PC-9 (cell line): ENCODE measurements at regions of chrX and their contacts with region 1.

Region 1: GRCh38 chrX:133171962-133172708 is 46.0 kb downstream of the TFDP3 start:
- DNase-seq: peak; percentile 19 to 51
- H3K4me3 ChIP-seq: no peak overlapping the region
- H3K27ac ChIP-seq: no peak overlapping the region
- H3K4me1 ChIP-seq: no peaks in the 10 kb centered on the region
- H3K27me3 ChIP-seq: no peaks in the 10 kb centered on the region
- CTCF ChIP-seq: peak; percentile 85

Region 2: DNA sequence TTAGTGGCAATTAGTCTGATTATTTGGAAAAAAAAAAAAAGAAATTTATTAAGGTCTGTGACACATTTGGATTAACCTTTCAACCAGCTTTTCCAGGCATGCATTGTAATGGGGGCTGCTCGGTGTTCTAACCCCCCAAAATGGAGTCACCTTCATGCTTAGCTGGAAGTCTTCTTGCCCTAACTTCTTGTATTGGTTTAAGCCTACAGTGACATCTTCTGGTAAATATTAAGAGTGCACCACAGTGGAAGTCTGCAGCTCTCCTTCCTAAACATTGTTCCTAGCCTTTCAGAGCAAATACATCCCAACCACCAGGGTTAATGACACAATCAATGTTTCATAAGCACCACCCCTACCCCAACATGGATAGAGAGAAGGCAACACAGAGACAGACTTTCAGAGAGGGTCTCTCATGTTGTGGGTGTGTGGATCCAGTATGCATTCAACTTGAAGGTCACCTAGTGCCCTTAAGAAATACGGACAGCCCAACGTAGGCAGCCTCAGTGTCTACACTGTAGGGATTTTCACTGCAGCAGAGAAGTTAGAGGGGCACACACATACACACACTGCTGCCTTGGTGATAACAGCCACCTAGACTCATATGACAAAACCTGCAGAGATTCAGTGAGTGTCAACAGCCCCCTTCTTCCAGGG is 540.4 kb before region 1 on chrX:
- CTCF ChIA-PET with region 1: no interaction called
- POLR2A ChIA-PET with region 1: no interaction called
- intact Hi-C with region 1: loop called (anchors 1 kb)
- DNase-seq: peak; percentile 5 to 36
- H3K4me3 ChIP-seq: no peak overlapping the region
- H3K27ac ChIP-seq: no peak overlapping the region
- H3K4me1 ChIP-seq: no peaks in the 10 kb centered on the region
- H3K27me3 ChIP-seq: no peaks in the 10 kb centered on the region
- CTCF ChIP-seq: peak; percentile 76

Region 3: GRCh38 chrX:132740316-132741123 is 431.6 kb before region 1 on chrX:
- CTCF ChIA-PET with region 1: no interaction called
- POLR2A ChIA-PET with region 1: no interaction called
- intact Hi-C with region 1: loop called (anchors 5 kb)
- DNase-seq: no peak
- H3K4me3 ChIP-seq: no peak overlapping the region
- H3K27ac ChIP-seq: no peak overlapping the region
- H3K4me1 ChIP-seq: peaks cover 29% of the 10 kb centered on the region
- H3K27me3 ChIP-seq: no peaks in the 10 kb centered on the region
- CTCF ChIP-seq: peak; percentile 93

Region 4: GRCh38 chrX:133005066-133005465 is 167.1 kb before region 1 on chrX:
- CTCF ChIA-PET with region 1: interaction called, 4 read pairs
- POLR2A ChIA-PET with region 1: no interaction called
- intact Hi-C with region 1: loop called (anchors 1 kb)
- DNase-seq: peak; percentile 4 to 36
- H3K4me3 ChIP-seq: no peak overlapping the region
- H3K27ac ChIP-seq: no peak overlapping the region
- H3K4me1 ChIP-seq: no peaks in the 10 kb centered on the region
- H3K27me3 ChIP-seq: no peaks in the 10 kb centered on the region
- CTCF ChIP-seq: peak; percentile 92

Region 5: DNA sequence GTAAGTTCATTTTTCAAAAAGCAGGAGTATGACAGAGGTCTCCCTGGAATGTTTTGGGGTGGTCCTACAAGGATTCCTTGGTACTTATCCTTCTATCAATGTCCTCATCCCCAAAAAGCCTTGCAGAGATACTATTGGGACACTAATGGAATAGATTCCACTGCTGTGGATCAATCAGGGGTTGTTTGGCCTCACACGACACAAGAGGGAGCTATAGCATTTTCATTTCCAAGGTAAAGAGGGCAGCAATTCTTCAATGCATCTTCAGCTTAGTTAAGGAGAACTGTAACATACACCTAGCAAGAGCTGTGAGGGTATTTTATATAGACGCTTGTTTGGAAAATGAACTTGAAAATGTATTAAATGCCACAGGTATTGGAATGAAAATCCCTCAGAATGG is 126.1 kb before region 1 on chrX:
- CTCF ChIA-PET with region 1: no interaction called
- POLR2A ChIA-PET with region 1: no interaction called
- intact Hi-C with region 1: loop called (anchors 1 kb)
- DNase-seq: peak in 1 of 2 experiments; percentile 8
- H3K4me3 ChIP-seq: no peak overlapping the region
- H3K27ac ChIP-seq: no peak overlapping the region
- H3K4me1 ChIP-seq: no peaks in the 10 kb centered on the region
- H3K27me3 ChIP-seq: no peaks in the 10 kb centered on the region
- CTCF ChIP-seq: peak; percentile 72

Region 6: GRCh38 chrX:133380711-133381619 is 208.8 kb after region 1 on chrX:
- CTCF ChIA-PET with region 1: no interaction called
- POLR2A ChIA-PET with region 1: no interaction called
- intact Hi-C with region 1: no loop called
- DNase-seq: no peak
- H3K4me3 ChIP-seq: no peak overlapping the region
- H3K27ac ChIP-seq: no peak overlapping the region
- H3K4me1 ChIP-seq: no peaks in the 10 kb centered on the region
- H3K27me3 ChIP-seq: no peaks in the 10 kb centered on the region
- CTCF ChIP-seq: no peak